MCF 10A (cell line): ENCODE measurements at regions of chr14 and their contacts with region 1.

Region 1: DNA sequence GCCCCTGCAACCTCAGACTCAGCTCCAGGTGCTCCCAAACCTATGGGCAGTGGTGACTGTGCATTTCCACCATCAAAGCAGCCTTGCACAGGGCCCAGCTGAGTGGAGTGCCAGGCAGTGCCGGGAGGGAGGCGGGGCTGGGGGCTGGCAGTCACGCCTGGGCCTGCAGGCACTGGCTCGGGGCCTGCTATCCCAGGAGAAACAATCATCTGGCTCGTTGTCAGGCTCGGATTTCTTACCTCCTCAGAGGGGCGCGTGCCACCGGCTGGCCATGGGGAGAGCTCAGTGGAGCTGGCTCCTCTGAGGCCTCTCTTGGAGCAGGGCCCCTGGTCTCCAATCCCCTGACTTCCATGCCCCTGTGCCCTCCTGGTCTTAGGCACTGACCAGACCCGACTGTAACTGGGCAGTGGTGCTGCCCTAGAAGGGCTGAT is 20.2 kb upstream of the PPP1R13B start:
- DNase-seq: peak; percentile 84
- H3K4me3 Mint-ChIP-seq: no peak overlapping the region
- H3K27ac Mint-ChIP-seq: peak overlapping the region; percentile 50
- H3K4me1 Mint-ChIP-seq: peaks cover 21% of the 10 kb centered on the region
- H3K27me3 Mint-ChIP-seq: no peaks in the 10 kb centered on the region
- CTCF ChIP-seq: no peak

Region 2: DNA sequence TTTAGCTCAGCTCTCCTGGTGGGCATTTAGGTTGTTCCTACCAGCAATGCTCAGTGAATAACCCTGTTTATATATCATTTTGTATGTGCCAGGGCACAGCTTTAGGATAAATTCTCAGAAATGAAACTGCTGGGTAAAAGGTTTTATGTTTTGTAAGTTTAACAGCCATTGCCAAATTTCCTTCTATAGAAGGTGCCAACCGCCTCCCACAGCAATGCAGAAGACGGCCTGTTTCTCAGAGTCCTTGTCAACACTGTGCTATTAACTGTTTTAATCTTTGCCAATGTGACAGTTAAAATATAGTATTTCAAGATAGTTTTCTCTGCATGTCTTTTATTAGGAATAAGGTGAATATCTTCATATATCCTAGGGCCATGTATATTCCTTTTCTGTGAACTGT is 85.2 kb before region 1 on chr14:
- CTCF ChIA-PET with region 1: no interaction called
- POLR2A ChIA-PET with region 1: no interaction called
- intact Hi-C with region 1: no loop called
- DNase-seq: no peak
- H3K4me3 Mint-ChIP-seq: no peak overlapping the region
- H3K27ac Mint-ChIP-seq: no peak overlapping the region
- H3K4me1 Mint-ChIP-seq: no peaks in the 10 kb centered on the region
- H3K27me3 Mint-ChIP-seq: no peaks in the 10 kb centered on the region
- CTCF ChIP-seq: no peak

Region 3: DNA sequence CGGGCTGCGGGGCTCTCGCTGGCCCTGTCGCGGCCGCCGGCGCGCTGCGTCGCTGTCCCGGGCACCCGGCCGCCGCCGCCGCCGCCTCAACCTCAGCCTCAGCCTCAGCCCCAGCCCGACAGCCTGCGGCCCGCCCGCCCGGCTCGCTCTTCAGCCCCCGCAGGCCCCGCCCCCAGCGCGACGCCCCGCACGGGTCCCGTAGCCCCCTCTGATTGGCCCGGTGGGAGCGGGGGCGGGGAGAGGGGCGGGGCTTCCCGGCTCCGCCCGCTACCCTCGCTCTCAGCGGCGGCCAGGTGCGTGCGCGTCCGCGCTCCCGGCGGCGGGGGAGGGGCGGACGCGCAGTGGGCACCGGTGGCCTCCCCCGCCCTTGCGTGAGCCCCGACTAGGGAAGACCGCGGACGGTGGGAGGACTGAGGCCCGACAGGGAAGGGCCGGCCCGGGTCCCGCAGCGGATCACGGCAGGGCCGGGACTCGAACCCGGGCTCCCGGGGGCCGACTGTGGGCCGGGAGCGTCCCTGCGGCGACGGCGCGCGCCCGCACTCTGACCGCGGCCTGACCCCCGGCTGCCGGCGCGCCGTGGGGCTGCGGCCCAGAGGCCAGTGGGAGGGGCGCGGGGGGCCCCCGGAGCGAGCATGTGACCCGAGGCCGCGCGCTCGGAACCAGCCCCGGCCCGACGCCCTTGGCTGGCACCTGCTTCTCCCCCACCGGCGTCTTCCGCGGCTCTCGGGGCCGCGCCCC is 19.9 kb before region 1 on chr14 and contains the start of gene PPP1R13B:
- CTCF ChIA-PET with region 1: no interaction called
- POLR2A ChIA-PET with region 1: interaction called, 16 read pairs
- intact Hi-C with region 1: no loop called
- DNase-seq: peak; percentile 90
- H3K4me3 Mint-ChIP-seq: peak within 1 kb of the TSS; percentile 77
- H3K27ac Mint-ChIP-seq: no peak within 1 kb of the TSS
- H3K4me1 Mint-ChIP-seq: peaks cover 9% of the 10 kb centered on the region
- H3K27me3 Mint-ChIP-seq: no peaks in the 10 kb centered on the region
- CTCF ChIP-seq: no peak
- total RNA-seq, gene PPP1R13B: 16.2 and 17.5 TPM in 2 replicates

Region 4: DNA sequence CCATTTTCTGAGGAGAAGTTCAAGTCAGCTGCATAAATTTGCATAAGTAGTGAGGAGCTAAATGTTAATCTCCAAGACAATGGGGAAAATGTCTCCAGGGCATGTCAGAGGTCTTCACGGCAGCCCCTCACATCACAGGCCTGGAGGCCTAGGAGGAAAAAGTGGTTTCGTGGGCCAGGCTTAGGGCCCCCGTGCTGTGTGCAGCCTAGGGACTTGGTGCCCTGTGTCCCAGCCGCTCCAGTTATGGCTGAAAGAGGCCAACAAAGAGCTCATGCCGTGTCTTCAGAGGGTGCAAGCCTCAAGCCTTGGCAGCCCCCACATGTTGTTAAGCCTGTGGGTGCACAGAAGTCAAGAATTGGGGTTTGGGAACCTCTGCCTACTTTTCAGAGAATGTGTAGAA is 116.7 kb after region 1 on chr14:
- CTCF ChIA-PET with region 1: interaction called, 12 read pairs
- POLR2A ChIA-PET with region 1: no interaction called
- intact Hi-C with region 1: no loop called
- DNase-seq: no peak
- H3K4me3 Mint-ChIP-seq: no peak overlapping the region
- H3K27ac Mint-ChIP-seq: no peak overlapping the region
- H3K4me1 Mint-ChIP-seq: no peaks in the 10 kb centered on the region
- H3K27me3 Mint-ChIP-seq: peaks cover 14% of the 10 kb centered on the region
- CTCF ChIP-seq: no peak